Endothelial cell of umbilical vein (primary cell): ENCODE measurements at regions of chr3 and their contacts with region 1.

Region 1: GRCh38 chr3:190384241-190384863 is 3.6 kb upstream of the CLDN16 start:
- DNase-seq: peak; percentile 45
- H3K4me3 ChIP-seq: no peak overlapping the region
- H3K27ac ChIP-seq: no peak overlapping the region
- H3K4me1 ChIP-seq: peaks cover 12% of the 10 kb centered on the region
- H3K27me3 ChIP-seq: no peaks in the 10 kb centered on the region
- CTCF ChIP-seq: peak; percentile 8 to 12
- POLR2A ChIP-seq: no peak

Region 2: DNA sequence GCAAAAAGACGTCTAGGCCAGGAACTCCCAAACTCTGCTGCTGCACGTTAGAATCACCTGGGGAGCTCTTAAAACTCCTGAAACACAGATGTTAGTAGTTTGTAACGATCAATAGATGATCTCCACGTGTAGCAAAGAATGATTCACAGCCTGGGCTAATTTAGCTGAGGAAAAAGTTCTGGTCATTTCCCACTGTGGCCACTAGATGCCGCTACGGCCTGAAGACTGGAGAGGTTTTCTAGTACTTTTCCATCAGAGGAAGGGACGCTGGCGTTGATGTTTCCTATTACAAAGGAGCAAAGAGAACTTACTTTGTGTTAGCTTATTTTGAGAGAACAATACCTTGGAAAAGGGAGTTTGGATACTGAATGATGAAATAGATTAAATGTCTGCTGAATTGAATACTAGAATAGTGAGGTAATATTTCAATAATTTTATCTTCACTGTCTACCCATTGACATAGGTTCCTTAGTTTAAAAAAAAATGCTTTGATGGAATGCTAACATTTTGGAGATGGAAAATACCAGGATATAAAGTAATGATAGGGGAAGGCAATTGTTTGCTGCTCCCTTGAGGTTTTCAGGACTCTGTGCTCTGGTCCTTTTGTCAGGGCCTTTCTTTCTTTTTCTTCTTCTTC is 422.7 kb before region 1 on chr3:
- CTCF ChIA-PET with region 1: interaction called, 26 read pairs
- POLR2A ChIA-PET with region 1: no interaction called
- dilution Hi-C with region 1: no loop called
- intact Hi-C with region 1: loop called (anchors 1 kb)
- DNase-seq: peak; percentile 89
- H3K4me3 ChIP-seq: no peak overlapping the region
- H3K27ac ChIP-seq: no peak overlapping the region
- H3K4me1 ChIP-seq: no peaks in the 10 kb centered on the region
- H3K27me3 ChIP-seq: no peaks in the 10 kb centered on the region
- CTCF ChIP-seq: peak; percentile 77 to 90
- POLR2A ChIP-seq: no peak

Region 3: DNA sequence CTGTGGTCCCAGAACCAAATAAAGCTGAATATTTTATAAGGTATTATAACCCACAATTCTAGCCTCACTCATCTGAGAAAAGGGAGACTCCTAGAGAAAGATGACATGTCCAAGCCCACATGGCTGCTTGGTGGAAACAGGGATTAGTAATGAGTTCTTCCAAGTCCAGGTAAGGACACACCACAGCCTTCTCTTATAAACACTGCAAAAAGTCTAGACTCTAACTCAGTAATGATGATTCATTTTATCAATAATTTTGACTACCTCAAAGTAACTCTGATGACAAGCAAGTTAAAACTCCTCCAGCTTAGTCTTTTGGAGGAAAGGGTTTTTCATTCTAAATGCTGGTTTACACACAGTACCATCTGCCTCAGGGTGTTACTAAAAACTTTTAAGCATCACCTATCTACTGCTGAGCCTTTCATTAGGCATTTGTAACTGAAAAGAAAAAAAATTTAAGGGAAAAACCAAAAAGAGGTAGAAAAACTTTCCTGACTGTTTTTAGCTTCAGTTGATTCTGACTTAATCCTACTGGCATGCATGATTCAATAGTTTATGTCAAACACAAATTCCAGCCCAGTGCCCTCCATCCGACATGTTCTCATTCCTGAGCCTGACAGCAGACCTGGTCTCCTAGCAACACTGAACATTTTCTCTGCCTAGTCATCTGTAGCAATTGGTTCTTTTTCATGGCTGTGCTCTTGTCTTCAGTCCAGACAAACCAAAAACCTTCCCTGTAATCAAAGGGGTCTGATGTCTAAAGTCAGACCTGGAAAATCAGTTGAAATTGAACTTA is 307.6 kb before region 1 on chr3:
- CTCF ChIA-PET with region 1: no interaction called
- POLR2A ChIA-PET with region 1: no interaction called
- dilution Hi-C with region 1: no loop called
- intact Hi-C with region 1: loop called (anchors 1 kb)
- DNase-seq: peak; percentile 86
- H3K4me3 ChIP-seq: no peak overlapping the region
- H3K27ac ChIP-seq: peak overlapping the region; percentile 67
- H3K4me1 ChIP-seq: peaks cover 21% of the 10 kb centered on the region
- H3K27me3 ChIP-seq: no peaks in the 10 kb centered on the region
- CTCF ChIP-seq: no peak
- POLR2A ChIP-seq: no peak

Region 4: DNA sequence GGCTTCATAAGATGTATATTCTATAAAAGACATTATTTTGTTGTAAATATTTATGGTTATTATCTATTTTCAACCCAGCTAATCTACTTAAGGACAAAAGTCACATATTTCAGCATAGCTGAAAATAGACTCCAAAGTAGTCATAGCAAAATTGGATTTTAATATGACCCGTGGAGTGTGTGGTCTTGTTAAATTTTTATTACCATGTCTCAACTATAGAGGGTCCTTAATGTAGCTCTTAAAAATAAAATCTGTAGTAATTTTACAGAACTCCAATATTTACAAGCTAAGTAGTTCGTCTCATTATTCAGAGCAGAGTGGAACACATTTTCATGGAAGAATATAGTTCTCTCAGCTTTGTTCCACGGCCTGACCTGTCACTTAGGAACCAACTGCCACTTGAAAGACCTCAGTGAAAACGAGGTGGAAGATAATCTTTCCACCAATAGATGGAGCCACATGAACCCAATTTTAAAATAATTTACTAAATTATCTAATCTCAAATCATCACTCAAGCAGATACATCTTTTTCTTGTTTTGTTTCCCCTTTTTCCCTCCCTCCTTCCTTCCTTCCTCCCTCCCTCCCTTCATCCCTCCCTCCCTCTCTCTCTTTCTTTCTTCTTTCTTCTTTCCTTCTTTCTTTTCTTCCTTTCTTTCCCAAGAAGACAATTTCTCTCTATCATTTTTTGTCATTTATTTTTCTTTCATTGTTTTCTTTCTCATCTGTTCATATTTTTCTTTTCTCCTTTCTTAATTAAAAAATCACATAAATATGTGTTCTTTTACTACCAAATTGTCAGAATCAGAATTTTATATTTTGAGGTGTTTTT is 159.3 kb before region 1 on chr3:
- CTCF ChIA-PET with region 1: interaction called, 56 read pairs
- POLR2A ChIA-PET with region 1: no interaction called
- dilution Hi-C with region 1: no loop called
- intact Hi-C with region 1: loop called (anchors 1 kb)
- DNase-seq: peak; percentile 58
- H3K4me3 ChIP-seq: no peak overlapping the region
- H3K27ac ChIP-seq: no peak overlapping the region
- H3K4me1 ChIP-seq: peaks cover 10% of the 10 kb centered on the region
- H3K27me3 ChIP-seq: no peaks in the 10 kb centered on the region
- CTCF ChIP-seq: peak; percentile 20 to 24
- POLR2A ChIP-seq: no peak

Region 5: GRCh38 chr3:190345027-190345821 is 39.1 kb before region 1 on chr3:
- CTCF ChIA-PET with region 1: interaction called, 8 read pairs
- POLR2A ChIA-PET with region 1: no interaction called
- dilution Hi-C with region 1: no loop called
- intact Hi-C with region 1: loop called (anchors 1 kb)
- DNase-seq: peak; percentile 75
- H3K4me3 ChIP-seq: peak overlapping the region in 1 of 3 experiments; percentile 48
- H3K27ac ChIP-seq: peak overlapping the region; percentile 89
- H3K4me1 ChIP-seq: peaks cover 21% of the 10 kb centered on the region
- H3K27me3 ChIP-seq: no peaks in the 10 kb centered on the region
- CTCF ChIP-seq: no peak
- POLR2A ChIP-seq: peak; percentile 40

Region 6: GRCh38 chr3:190414297-190414696 is 29.9 kb after region 1 on chr3:
- CTCF ChIA-PET with region 1: interaction called, 10 read pairs
- POLR2A ChIA-PET with region 1: no interaction called
- dilution Hi-C with region 1: no loop called
- intact Hi-C with region 1: no loop called
- DNase-seq: no peak
- H3K4me3 ChIP-seq: no peak overlapping the region
- H3K27ac ChIP-seq: no peak overlapping the region
- H3K4me1 ChIP-seq: no peaks in the 10 kb centered on the region
- H3K27me3 ChIP-seq: no peaks in the 10 kb centered on the region
- CTCF ChIP-seq: no peak
- POLR2A ChIP-seq: no peak